ENCODE measurements at regions of chr14 and their contacts with region 1.

Region 1: GRCh38 chr14:68487805-68488590 is 304.9 kb downstream of the ZFP36L1 start:
- DNase-seq: no peak
- ATAC-seq: no peak
- H3K4me3 Mint-ChIP-seq: no peak overlapping the region
- H3K27ac Mint-ChIP-seq: no peak overlapping the region
- H3K4me1 Mint-ChIP-seq: peaks cover 45% of the 10 kb centered on the region
- H3K27me3 Mint-ChIP-seq: no peaks in the 10 kb centered on the region
- CTCF ChIP-seq: no peak

Region 2: GRCh38 chr14:68471029-68471963 is 16.7 kb before region 1 on chr14:
- CTCF ChIA-PET with region 1: no interaction called
- POLR2A ChIA-PET with region 1: interaction called, 92 read pairs
- intact Hi-C with region 1: no loop called
- DNase-seq: peak; percentile 22
- ATAC-seq: peak; percentile 69
- H3K4me3 Mint-ChIP-seq: peak overlapping the region; percentile 38
- H3K27ac Mint-ChIP-seq: peak overlapping the region; percentile 96
- H3K4me1 Mint-ChIP-seq: peaks cover 85% of the 10 kb centered on the region
- H3K27me3 Mint-ChIP-seq: no peaks in the 10 kb centered on the region
- CTCF ChIP-seq: no peak

Measured in activated B cell treated with CpG ODN at 0.5 μM for 24 hours (primary cell).